Motor neuron (in vitro differentiated cells): ENCODE measurements at regions of chr4 and their contacts with region 1.

Region 1: GRCh38 chr4:41882625-41883347 is 52.4 kb upstream of the TMEM33 start:
- ATAC-seq: peak; percentile 54 to 75 (median 67)
- H3K4me3 ChIP-seq: peak overlapping the region in 3 of 5 donors; percentile 29 to 37 (median 35)
- H3K27ac ChIP-seq: no peak overlapping the region
- H3K4me1 ChIP-seq: peaks cover 26 to 27% of the 10 kb centered on the region in 2 donors

Region 2: GRCh38 chr4:41257257-41257901 is 625.4 kb before region 1 on chr4:
- in situ Hi-C with region 1: loop called in 1 of 9 experiments (anchors 25 kb)
- ATAC-seq: peak; percentile 62 to 87 (median 78)
- H3K4me3 ChIP-seq: peak overlapping the region; percentile 58 to 82 (median 67)
- H3K27ac ChIP-seq: peak overlapping the region; percentile 80 to 86
- H3K4me1 ChIP-seq: peaks cover 14 to 18% of the 10 kb centered on the region in 2 donors

Region 3: GRCh38 chr4:41334183-41334582 is 548.6 kb before region 1 on chr4:
- in situ Hi-C with region 1: no loop called
- ATAC-seq: no peak
- H3K4me3 ChIP-seq: no peak overlapping the region
- H3K27ac ChIP-seq: no peak overlapping the region
- H3K4me1 ChIP-seq: no peaks in the 10 kb centered on the region

Region 4: DNA sequence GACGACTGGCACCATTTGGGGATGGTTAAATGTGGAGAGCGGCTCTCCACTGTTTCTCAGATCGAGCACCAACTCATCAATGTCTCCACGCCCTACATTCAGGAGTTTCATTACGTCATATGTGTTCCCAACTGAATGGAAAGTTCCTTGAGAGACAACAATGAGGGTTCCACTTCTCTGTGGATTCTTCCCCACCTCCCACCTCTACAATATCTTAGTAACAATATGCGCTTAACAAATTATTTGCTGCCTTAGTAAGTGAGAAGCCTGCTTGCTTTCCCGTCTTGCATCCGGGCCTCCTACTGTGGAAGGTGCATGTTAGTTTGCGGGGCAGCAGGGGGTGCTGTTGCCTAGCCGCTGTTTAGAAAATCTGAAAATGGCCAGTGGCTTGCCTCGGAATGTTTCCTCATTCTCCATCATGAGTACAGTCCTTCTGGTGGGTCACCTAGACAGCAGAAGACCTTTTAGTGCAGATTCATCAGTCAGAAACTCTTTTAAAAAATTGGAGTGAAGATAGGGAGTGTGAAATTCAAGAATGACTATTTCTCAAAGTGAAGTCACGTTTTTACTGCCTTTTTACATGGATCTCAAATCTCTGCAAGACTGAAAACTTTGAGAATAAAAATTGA is 190.0 kb before region 1 on chr4:
- in situ Hi-C with region 1: loop called in 7 of 9 experiments (anchors 5 to 25 kb)
- ATAC-seq: peak; percentile 66 to 93 (median 74)
- H3K4me3 ChIP-seq: no peak overlapping the region
- H3K27ac ChIP-seq: no peak overlapping the region
- H3K4me1 ChIP-seq: peaks cover 0 to 2% of the 10 kb centered on the region in 2 donors

Region 5: GRCh38 chr4:41709844-41710481 is 172.8 kb before region 1 on chr4:
- in situ Hi-C with region 1: loop called in 1 of 9 experiments (anchors 25 kb)
- ATAC-seq: peak in 7 of 8 experiments; percentile 40 to 99 (median 80)
- H3K4me3 ChIP-seq: no peak overlapping the region
- H3K27ac ChIP-seq: no peak overlapping the region
- H3K4me1 ChIP-seq: peaks cover 0 to 5% of the 10 kb centered on the region in 2 donors